ENCODE measurements at regions of chr22 and their contacts with region 1.

Region 1: DNA sequence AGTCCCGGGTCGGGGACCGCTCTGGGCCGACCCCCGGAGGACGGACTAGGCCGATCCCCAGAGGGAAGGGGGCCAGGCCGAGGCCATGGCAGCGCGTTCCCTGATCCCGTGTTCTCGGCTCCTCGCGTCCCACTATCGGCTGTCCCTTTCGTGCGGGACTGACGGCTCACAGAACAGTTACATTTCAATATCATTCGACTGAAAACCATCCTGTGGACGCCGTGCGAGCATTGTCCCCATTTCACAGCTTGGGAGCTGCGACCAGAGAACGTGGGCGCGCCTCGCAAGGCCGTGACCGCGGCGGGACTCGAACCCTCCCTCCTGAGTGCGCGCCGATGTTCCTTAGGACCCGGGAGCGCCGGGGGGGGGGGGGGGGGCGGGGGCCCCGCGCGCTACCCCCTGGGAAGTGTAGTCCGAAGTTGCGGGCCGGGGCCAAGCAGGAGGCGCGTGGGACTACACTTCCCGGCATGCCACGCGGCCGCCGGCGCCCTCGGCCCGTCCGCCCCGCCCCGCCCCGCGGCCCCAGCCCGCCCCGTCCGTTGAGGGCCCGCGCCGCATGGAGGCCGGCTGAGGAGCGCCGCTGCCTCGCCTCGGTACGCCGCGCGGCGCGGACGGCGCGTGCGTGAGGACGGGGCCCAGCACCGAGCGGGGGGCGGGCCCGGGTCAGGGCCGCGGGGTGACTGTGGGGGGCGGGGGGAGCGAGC is at the start of gene TRABD:
- DNase-seq: peak; percentile 85 to 90 (median 87)
- H3K4me3 ChIP-seq: peak within 1 kb of the TSS; percentile 65 to 73
- H3K4me3 Mint-ChIP-seq: peak within 1 kb of the TSS; percentile 90 to 99 (median 96)
- H3K27ac ChIP-seq: peak within 1 kb of the TSS; percentile 68
- H3K27ac Mint-ChIP-seq: peak within 1 kb of the TSS; percentile 94 to 98 (median 97)
- H3K4me1 ChIP-seq: peaks cover 40% of the 10 kb centered on the region
- H3K4me1 Mint-ChIP-seq: peaks cover 9 to 41% (median 27%) of the 10 kb centered on the region in 4 donors
- H3K27me3 ChIP-seq: no peaks in the 10 kb centered on the region
- H3K27me3 Mint-ChIP-seq: peaks cover 0 to 2% of the 10 kb centered on the region in 2 donors
- total RNA-seq, gene TRABD: 124 to 126 TPM

Region 2: DNA sequence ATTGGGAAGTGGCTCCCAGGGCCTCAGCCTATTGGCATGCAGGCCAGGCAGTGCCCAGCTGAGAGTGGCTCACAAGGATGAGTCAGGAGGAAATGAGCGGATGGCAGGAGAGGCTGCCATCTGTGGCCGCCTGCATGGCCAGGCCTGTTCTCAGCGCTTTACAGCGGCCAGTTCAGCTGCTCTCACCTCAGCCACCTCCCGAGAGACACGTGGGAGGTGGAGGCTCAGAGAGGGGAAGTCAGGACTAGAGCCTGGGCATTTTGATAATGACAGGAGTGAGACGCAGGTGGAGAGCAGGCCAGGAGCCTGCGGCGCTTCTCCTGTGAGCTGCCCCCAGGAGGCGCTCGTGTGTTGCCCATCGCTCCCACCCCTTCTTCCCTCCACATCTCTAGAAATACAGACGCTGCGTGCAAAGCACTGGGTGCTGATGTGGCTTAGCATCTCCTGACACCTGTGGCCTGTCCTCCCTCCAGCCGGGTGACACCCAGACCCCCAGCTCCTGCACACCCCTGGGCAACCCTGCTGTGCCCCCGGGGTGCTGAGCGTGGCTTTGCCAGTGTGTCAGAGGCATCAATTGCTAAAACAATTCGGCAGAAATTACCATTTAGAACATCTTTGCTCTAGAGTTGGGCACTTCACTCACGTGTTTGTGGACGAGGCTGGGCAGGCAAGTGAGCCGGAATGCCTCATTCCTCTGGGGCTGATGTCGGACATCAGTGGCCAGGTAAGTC is 36.4 kb before region 1 on chr22:
- CTCF ChIA-PET with region 1: interaction called, 8 read pairs
- POLR2A ChIA-PET with region 1: interaction called, 14 read pairs
- intact Hi-C with region 1: loop called (anchors 1 kb)
- DNase-seq: peak; percentile 69 to 76 (median 75)
- H3K4me3 ChIP-seq: no peak overlapping the region
- H3K4me3 Mint-ChIP-seq: no peak overlapping the region
- H3K27ac ChIP-seq: no peak overlapping the region
- H3K27ac Mint-ChIP-seq: peak overlapping the region in 1 of 7 donors; percentile 7
- H3K4me1 ChIP-seq: no peaks in the 10 kb centered on the region
- H3K4me1 Mint-ChIP-seq: peaks cover 0 to 4% (median under 1%) of the 10 kb centered on the region in 4 donors
- H3K27me3 ChIP-seq: no peaks in the 10 kb centered on the region
- H3K27me3 Mint-ChIP-seq: peaks cover 2 to 3% of the 10 kb centered on the region in 2 donors

Region 3: DNA sequence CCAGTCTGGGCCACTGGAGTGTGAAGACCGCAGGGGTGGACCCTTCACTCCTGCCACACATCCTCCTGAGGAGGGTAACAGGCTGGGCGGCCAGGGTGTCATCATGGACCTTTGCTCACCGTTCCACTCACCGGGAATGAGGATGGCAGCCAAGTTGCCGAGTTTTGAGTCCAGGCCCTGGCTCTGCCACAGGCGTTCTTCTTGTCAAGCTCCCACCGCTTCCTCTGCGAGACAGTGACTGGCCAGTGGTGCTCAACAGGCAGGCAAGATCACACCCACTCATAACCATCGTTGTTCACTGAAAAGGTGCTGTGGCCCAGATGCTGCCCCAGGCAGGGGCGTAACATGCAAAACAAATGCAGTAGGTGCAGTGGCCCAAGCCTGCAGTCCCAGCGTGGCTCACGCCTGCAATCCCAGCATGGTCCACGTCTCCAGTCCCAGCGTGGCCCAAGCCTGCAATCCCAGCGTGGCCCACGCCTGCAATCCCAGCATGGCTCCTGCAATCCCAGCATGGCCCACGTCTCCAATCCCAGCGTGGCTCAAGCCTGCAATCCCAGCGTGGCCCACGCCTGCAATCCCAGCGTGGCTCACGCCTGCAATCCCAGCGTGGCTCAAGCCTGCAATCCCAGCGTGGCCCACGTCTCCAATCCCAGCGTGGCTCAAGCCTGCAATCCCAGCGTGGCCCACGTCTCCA is 20.0 kb before region 1 on chr22:
- CTCF ChIA-PET with region 1: no interaction called
- POLR2A ChIA-PET with region 1: no interaction called
- intact Hi-C with region 1: no loop called
- DNase-seq: no peak
- H3K4me3 ChIP-seq: no peak overlapping the region
- H3K4me3 Mint-ChIP-seq: no peak overlapping the region
- H3K27ac ChIP-seq: no peak overlapping the region
- H3K27ac Mint-ChIP-seq: no peak overlapping the region
- H3K4me1 ChIP-seq: no peaks in the 10 kb centered on the region
- H3K4me1 Mint-ChIP-seq: peaks cover 0 to 8% (median 0%) of the 10 kb centered on the region in 4 donors
- H3K27me3 ChIP-seq: peaks cover 9% of the 10 kb centered on the region
- H3K27me3 Mint-ChIP-seq: peaks cover 17 to 20% of the 10 kb centered on the region in 2 donors

Region 4: DNA sequence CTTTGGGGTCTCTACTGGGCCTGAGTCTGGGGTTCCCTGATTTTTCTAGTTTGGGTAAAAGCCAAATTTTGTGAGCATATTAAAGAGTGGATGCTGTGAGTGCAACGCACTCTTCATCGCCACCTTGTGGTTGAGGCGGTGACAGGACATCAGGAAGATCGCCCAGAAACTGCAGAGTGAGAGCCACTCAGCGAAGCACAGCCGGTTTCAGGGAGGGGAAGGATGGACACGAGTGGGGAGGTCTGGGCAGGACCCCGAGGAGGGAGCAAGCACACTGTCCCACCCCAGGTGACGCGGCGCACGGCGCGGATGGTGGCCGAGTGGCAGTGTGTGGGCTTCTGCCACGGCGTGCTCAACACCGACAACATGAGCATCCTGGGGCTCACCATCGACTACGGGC is 24.4 kb after region 1 on chr22:
- CTCF ChIA-PET with region 1: interaction called, 11 read pairs
- POLR2A ChIA-PET with region 1: interaction called, 19 read pairs
- intact Hi-C with region 1: no loop called
- DNase-seq: peak; percentile 66 to 75 (median 71)
- H3K4me3 ChIP-seq: no peak overlapping the region
- H3K4me3 Mint-ChIP-seq: peak overlapping the region in 1 of 8 donors; percentile 33
- H3K27ac ChIP-seq: no peak overlapping the region
- H3K27ac Mint-ChIP-seq: peak overlapping the region; percentile 61 to 94 (median 80)
- H3K4me1 ChIP-seq: peaks cover 8% of the 10 kb centered on the region
- H3K4me1 Mint-ChIP-seq: peaks cover 15 to 40% (median 20%) of the 10 kb centered on the region in 4 donors
- H3K27me3 ChIP-seq: no peaks in the 10 kb centered on the region
- H3K27me3 Mint-ChIP-seq: no peaks in the 10 kb centered on the region

Region 5: DNA sequence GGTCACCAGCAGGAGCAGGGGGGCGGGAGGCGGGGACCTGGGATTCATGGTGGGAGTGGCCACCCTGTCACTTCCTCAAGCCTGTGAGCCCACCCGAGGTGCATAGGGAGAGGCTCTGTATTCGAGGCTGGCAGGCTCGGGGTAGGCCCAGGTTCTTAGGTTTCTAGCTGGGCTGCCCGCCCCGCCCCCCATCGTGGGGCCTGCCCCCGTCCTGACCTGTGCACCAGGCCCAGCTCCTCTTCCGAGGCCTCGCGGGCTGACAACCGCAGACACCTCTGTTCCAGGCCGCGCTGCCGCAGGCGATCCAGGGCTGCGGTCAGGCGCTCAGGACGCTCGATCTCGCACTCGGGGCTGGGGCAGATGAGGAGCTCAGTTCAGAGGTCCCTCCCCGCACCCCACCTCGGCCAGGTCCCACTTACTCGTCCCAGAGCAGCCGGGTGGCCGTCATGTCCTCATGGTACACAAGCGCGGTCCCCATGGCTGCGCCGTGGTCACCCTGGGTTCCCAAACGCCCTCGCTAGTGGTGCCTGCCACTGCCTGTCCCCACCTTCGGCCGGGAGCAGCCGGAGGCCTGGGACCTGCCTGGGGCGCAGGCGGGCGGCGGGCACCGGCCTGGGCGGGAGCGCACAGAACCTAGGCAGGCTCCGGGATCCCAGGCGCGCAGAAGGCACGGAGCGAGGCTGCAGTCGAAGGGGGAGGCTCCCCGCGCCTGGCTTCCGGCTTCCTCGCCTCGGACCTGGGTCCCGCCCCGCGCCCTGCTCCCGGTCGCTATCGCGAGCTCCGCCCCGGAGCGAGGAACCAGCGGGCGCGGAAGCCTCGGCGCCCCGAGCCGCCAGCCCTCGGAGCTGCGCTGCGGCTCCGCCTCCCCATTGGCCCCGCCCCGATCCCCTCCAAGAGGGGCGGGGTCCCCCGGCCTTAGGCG is 65.3 kb after region 1 on chr22 and contains the start of gene HDAC10:
- CTCF ChIA-PET with region 1: no interaction called
- POLR2A ChIA-PET with region 1: interaction called, 32 read pairs
- intact Hi-C with region 1: no loop called
- DNase-seq: peak; percentile 71 to 78 (median 74)
- H3K4me3 ChIP-seq: peak within 1 kb of the TSS; percentile 36 to 89
- H3K4me3 Mint-ChIP-seq: peak within 1 kb of the TSS; percentile 73 to 84 (median 78)
- H3K27ac ChIP-seq: peak within 1 kb of the TSS; percentile 66
- H3K27ac Mint-ChIP-seq: peak within 1 kb of the TSS in 6 of 7 donors; percentile 50 to 88 (median 64)
- H3K4me1 ChIP-seq: peaks cover 44% of the 10 kb centered on the region
- H3K4me1 Mint-ChIP-seq: peaks cover 7 to 29% (median 17%) of the 10 kb centered on the region in 4 donors
- H3K27me3 ChIP-seq: no peaks in the 10 kb centered on the region
- H3K27me3 Mint-ChIP-seq: peaks cover 1 to 2% of the 10 kb centered on the region in 2 donors
- total RNA-seq, gene HDAC10: 141 to 151 TPM